Activated CD8-positive, alpha-beta T cell treated with anti-CD3 and anti-CD28 coated beads, Interleukin-2, amount 10 ng/mL, durations not matched to agents 7 days and 5 days (primary cell): ENCODE measurements at regions of chr12 and their contacts with region 1.

Region 1: DNA sequence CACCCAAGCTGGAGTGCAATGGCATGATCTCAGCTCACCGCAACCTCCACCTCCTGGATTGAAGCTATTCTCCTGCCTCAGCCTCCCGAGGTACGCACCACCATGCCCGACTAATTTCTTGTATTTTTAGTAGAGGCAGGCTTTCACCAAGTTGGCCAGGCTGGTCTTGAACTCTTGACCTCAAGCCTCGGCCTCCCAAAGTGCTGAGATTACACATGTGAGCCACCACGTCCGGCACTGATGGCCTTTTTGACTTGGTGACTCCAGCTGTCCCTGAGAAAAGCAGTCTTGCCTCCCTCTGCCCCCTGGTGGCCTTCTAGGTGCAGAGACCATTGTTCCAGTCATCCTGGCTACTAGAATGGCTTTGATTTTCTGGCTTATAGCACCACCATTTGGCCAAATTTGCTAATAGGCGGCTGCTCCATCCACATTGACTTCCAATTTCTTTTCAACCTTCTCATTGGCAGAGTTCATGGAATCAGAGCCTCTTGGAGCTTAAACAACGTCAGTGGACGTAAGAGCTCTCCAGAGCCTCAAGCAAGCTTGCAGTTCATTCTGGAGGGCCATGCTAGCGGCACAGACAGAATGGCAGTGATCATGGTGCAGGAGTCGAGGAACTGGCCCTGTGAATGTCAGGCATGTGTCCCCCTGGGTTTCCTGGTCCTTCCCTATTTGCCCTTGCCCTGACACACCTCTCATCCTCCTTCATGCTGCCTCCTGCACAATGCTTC is 25.4 kb upstream of the EIF4B start:
- DNase-seq: peak; percentile 90
- ATAC-seq: peak; percentile 91
- H3K4me3 Mint-ChIP-seq: no peak overlapping the region
- H3K27ac Mint-ChIP-seq: no peak overlapping the region
- H3K4me1 Mint-ChIP-seq: no peaks in the 10 kb centered on the region
- H3K27me3 Mint-ChIP-seq: peaks cover 30% of the 10 kb centered on the region

Region 2: GRCh38 chr12:52879394-52880351 is 101.2 kb before region 1 on chr12:
- CTCF ChIA-PET with region 1: interaction called, 445 read pairs
- POLR2A ChIA-PET with region 1: interaction called, 6 read pairs
- DNase-seq: peak; percentile 84
- ATAC-seq: peak; percentile 97
- H3K4me3 Mint-ChIP-seq: peak overlapping the region; percentile 49
- H3K27ac Mint-ChIP-seq: no peak overlapping the region
- H3K4me1 Mint-ChIP-seq: peaks cover 13% of the 10 kb centered on the region
- H3K27me3 Mint-ChIP-seq: peaks cover 11% of the 10 kb centered on the region

Region 3: GRCh38 chr12:52910248-52910883 is 70.5 kb before region 1 on chr12:
- CTCF ChIA-PET with region 1: interaction called, 12 read pairs
- POLR2A ChIA-PET with region 1: no interaction called
- DNase-seq: no peak
- ATAC-seq: no peak
- H3K4me3 Mint-ChIP-seq: no peak overlapping the region
- H3K27ac Mint-ChIP-seq: no peak overlapping the region
- H3K4me1 Mint-ChIP-seq: peaks cover 5% of the 10 kb centered on the region
- H3K27me3 Mint-ChIP-seq: peaks cover 6% of the 10 kb centered on the region

Region 4: GRCh38 chr12:52929538-52929937 is 51.3 kb before region 1 on chr12:
- CTCF ChIA-PET with region 1: interaction called, 12 read pairs
- POLR2A ChIA-PET with region 1: no interaction called
- DNase-seq: no peak
- ATAC-seq: no peak
- H3K4me3 Mint-ChIP-seq: no peak overlapping the region
- H3K27ac Mint-ChIP-seq: no peak overlapping the region
- H3K4me1 Mint-ChIP-seq: peaks cover 6% of the 10 kb centered on the region
- H3K27me3 Mint-ChIP-seq: peaks cover 4% of the 10 kb centered on the region

Region 5: DNA sequence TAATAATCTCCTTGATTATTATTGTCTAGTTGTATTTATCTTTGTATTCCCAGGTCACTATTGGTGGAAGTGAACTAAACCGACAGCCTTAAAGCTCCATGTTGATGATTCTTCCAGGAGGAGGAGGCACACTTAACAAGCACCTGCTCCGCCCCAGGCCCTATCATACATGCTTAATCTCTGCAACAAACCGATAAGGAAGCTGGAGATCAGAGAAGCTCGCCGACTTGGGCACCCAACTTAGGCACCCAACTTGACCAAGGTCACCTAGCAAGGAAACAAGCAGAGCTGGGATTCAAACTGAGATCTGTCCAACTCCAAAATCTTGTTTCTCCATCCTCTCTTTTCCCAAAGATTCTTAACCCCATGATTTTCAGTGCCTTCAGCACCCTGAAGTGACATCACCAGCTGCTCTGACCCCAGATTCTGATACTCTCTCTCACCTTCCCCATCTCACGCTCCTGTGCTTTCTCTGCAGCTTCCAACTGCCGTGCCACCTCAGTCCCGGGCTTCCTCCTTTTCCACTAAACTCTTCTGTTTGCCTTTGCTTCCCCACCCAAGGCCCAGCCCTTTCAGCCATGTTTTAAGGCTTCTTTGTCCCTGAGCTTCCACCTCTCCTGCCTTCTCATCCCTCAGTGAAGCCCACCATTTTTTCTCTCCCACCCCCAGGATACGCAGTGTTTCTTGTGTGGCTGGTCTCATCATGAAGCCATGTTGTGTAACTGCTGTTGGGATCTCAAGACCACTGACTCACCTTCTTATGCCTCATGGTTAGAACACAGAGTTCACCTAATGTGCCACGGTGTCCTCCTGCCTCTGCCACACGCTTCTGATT is 38.6 kb before region 1 on chr12:
- CTCF ChIA-PET with region 1: no interaction called
- POLR2A ChIA-PET with region 1: no interaction called
- DNase-seq: no peak
- ATAC-seq: no peak
- H3K4me3 Mint-ChIP-seq: no peak overlapping the region
- H3K27ac Mint-ChIP-seq: no peak overlapping the region
- H3K4me1 Mint-ChIP-seq: no peaks in the 10 kb centered on the region
- H3K27me3 Mint-ChIP-seq: peaks cover 10% of the 10 kb centered on the region

Region 6: DNA sequence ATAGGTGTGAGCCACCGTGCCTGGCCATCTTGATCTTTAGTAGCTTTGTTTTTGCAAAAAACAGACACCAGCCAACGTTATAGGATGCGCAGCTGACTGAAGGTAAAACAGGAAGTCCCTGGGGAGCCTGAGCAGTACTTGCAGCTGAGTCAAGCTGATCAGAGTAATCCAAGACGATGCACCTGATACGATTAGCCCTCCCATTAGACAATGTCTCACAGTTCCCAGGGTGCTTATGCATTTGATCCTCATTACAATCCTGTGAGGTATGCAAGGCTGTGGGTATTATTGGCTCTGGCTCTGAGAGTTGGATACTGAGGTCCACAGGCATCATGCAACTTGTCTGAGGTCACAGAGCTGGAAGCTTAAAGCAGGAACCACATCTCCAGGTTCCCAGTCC is 23.9 kb before region 1 on chr12:
- CTCF ChIA-PET with region 1: interaction called, 15 read pairs
- POLR2A ChIA-PET with region 1: no interaction called
- DNase-seq: no peak
- ATAC-seq: no peak
- H3K4me3 Mint-ChIP-seq: no peak overlapping the region
- H3K27ac Mint-ChIP-seq: no peak overlapping the region
- H3K4me1 Mint-ChIP-seq: peaks cover 3% of the 10 kb centered on the region
- H3K27me3 Mint-ChIP-seq: peaks cover 2% of the 10 kb centered on the region